MCF 10A (cell line): ENCODE measurements at regions of chr2 and their contacts with region 1.

Region 1: DNA sequence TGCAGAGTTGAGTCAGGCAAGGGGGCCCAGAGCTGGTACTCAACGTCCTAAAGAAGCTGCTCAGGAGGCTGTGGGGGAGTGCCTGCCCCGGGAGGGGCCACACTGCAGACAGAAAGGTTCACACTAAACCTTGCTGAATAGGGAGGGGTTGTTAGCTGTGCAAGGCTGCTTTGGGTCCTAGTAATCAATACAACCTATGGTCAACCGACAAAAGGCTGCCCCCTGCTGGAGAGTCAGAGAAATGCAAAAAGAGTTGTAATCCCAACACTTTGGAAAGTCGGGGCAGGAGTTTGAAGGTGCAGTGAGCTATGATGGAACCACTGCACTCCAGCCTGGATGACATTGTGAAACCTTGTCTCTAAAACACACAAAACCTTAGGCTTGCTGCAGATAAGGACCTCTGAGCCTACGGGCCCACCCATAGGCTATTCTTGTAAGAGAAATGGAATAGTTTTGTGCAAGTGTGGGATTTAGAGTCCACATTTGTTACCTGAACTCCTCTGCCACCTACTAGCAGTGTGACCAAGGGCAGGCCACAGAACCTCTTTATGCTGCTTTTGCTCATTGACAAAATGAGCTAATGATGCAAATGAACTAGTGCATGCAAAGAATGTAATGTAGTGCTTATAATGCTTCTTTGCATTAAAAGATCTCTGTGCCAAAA is 81.5 kb downstream of the PRPF40A start:
- DNase-seq: peak; percentile 72
- H3K4me3 Mint-ChIP-seq: no peak overlapping the region
- H3K27ac Mint-ChIP-seq: no peak overlapping the region
- H3K4me1 Mint-ChIP-seq: no peaks in the 10 kb centered on the region
- H3K27me3 Mint-ChIP-seq: no peaks in the 10 kb centered on the region
- CTCF ChIP-seq: peak; percentile 77

Region 2: DNA sequence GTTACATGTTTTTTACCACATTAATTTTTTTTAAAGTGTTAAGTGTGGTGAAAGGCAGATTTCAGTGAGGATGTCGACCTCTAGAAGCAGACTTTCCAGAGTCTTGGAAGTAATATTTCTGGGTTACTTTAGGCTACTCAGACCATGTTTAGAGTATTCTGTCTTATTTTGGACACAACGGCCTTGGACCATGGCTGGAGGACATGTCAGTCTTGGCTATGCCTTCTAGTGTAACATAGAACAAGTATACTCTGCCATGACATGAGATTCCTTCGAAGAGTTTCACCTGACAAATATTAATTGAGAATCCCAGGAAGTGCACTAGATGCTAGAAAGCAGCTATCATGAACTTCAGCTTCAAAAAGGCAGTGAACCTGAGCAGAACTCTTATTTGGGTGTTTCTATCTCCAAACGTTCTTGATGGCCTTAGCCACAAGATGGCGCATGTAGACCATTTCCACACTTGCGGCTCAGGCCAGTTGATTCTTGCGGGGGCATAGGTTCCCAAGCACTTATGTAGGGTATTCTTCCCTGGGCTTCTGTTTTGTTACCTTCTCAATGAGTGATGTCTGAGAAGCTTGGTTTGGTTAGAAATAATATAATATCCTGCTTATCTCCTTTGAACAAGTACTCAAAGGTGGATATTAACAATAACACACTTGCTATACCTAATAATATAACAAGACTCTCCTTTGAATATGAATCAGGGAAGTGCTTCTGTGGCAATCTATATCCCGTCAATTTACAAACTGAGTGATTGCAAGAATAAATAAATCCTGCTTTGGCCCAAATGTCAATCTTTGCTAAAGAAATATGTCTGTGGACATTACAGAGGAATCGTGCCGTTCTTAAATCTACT is 598.9 kb before region 1 on chr2:
- CTCF ChIA-PET with region 1: interaction called, 35 read pairs
- POLR2A ChIA-PET with region 1: no interaction called
- intact Hi-C with region 1: loop called (anchors 1 kb)
- DNase-seq: peak; percentile 76
- H3K4me3 Mint-ChIP-seq: no peak overlapping the region
- H3K27ac Mint-ChIP-seq: no peak overlapping the region
- H3K4me1 Mint-ChIP-seq: no peaks in the 10 kb centered on the region
- H3K27me3 Mint-ChIP-seq: no peaks in the 10 kb centered on the region
- CTCF ChIP-seq: peak; percentile 86

Region 3: DNA sequence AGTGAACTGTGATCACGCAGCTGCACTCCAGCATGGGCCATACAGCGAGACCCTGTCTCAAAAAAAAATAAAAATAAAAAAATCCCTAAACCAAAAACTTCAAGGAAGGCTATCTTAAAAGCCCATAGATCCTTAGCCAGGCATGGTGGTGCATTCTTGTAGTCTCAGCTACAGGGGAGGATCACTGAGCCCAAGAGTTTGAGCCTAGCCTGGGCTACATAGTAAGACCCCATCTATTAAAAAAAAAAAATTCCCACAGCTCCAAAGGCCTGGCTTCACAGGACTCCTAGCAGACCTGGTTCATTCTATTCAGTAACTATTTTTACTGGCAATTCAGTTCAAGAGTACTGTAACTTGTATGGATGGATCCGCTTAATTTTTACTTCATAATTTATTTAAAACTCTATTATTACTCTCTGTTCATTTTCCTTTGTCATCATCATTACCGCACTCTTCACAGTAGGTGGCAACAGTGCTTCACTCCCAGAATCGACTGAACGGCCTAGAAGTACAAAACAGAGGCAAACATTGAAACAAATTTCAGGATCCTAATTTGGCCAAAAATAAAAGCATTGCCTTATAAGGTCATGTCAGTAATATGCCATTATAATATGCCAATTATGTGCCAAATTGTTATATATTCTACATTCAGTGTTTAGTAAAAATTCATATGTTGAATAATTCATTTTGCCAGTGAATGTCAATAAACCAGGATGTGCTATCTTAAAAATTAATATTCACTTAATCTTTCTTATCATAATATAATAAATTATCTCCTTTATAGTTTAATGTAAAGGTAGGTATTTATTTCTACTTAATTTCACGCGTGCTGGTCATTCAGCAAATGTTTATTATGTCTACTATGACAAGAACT is 445.9 kb before region 1 on chr2:
- CTCF ChIA-PET with region 1: interaction called, 52 read pairs
- POLR2A ChIA-PET with region 1: interaction called, 9 read pairs
- intact Hi-C with region 1: loop called (anchors 1 kb)
- DNase-seq: peak; percentile 85
- H3K4me3 Mint-ChIP-seq: no peak overlapping the region
- H3K27ac Mint-ChIP-seq: no peak overlapping the region
- H3K4me1 Mint-ChIP-seq: no peaks in the 10 kb centered on the region
- H3K27me3 Mint-ChIP-seq: no peaks in the 10 kb centered on the region
- CTCF ChIP-seq: peak; percentile 84

Region 4: GRCh38 chr2:152354909-152355308 is 280.9 kb before region 1 on chr2:
- CTCF ChIA-PET with region 1: no interaction called
- POLR2A ChIA-PET with region 1: no interaction called
- intact Hi-C with region 1: no loop called
- DNase-seq: peak; percentile 27
- H3K4me3 Mint-ChIP-seq: no peak overlapping the region
- H3K27ac Mint-ChIP-seq: peak overlapping the region; percentile 27
- H3K4me1 Mint-ChIP-seq: peaks cover 18% of the 10 kb centered on the region
- H3K27me3 Mint-ChIP-seq: no peaks in the 10 kb centered on the region
- CTCF ChIP-seq: no peak

Region 5: GRCh38 chr2:152485954-152486736 is 149.6 kb before region 1 on chr2:
- CTCF ChIA-PET with region 1: interaction called, 10 read pairs
- POLR2A ChIA-PET with region 1: no interaction called
- intact Hi-C with region 1: no loop called
- DNase-seq: no peak
- H3K4me3 Mint-ChIP-seq: no peak overlapping the region
- H3K27ac Mint-ChIP-seq: no peak overlapping the region
- H3K4me1 Mint-ChIP-seq: peaks cover 6% of the 10 kb centered on the region
- H3K27me3 Mint-ChIP-seq: no peaks in the 10 kb centered on the region
- CTCF ChIP-seq: no peak

Region 6: GRCh38 chr2:152558158-152558984 is 77.4 kb before region 1 on chr2:
- CTCF ChIA-PET with region 1: no interaction called
- POLR2A ChIA-PET with region 1: no interaction called
- intact Hi-C with region 1: no loop called
- DNase-seq: peak; percentile 64
- H3K4me3 Mint-ChIP-seq: no peak overlapping the region
- H3K27ac Mint-ChIP-seq: no peak overlapping the region
- H3K4me1 Mint-ChIP-seq: peaks cover 12% of the 10 kb centered on the region
- H3K27me3 Mint-ChIP-seq: no peaks in the 10 kb centered on the region
- CTCF ChIP-seq: no peak

Region 7: DNA sequence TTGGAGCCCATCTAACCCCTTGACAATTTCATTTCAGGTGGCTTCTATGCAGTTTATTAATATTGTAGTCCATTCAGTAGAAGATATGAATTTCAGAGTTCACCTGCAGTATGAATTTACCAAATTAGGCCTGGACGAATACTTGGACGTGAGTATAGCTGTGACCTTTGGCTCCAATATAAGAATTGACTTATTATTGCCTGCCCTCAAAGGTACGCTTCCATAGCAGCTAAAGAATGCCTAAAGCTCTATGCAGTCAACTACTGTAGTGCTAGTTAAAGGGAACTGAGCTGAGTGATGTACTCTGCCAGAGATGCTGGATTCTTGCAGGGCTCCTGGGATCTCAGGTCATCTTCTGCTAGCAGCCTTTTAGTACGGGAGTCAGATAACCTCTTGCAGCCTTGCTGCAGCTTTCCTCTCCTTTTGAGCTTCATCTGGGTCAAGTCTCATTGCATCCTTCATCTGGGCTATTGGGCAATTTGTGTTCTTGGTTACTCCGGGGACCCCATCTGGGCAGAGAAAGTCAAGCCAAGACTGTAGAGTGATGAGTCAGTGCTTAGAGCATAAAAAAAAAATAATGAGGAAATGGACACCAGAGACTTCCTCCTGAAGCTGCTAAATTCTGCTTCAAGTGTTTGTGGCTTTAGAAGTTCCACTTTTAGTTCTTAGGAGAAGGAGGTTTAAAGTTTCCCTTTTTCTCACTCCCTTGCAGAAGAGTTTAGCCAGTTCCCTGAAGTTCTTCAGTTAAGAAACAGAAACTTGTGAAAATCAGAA is 24.1 kb before region 1 on chr2:
- CTCF ChIA-PET with region 1: interaction called, 32 read pairs
- POLR2A ChIA-PET with region 1: interaction called, 3 read pairs
- intact Hi-C with region 1: no loop called
- DNase-seq: peak; percentile 81
- H3K4me3 Mint-ChIP-seq: no peak overlapping the region
- H3K27ac Mint-ChIP-seq: peak overlapping the region; percentile 20
- H3K4me1 Mint-ChIP-seq: peaks cover 6% of the 10 kb centered on the region
- H3K27me3 Mint-ChIP-seq: no peaks in the 10 kb centered on the region
- CTCF ChIP-seq: no peak

Region 8: DNA sequence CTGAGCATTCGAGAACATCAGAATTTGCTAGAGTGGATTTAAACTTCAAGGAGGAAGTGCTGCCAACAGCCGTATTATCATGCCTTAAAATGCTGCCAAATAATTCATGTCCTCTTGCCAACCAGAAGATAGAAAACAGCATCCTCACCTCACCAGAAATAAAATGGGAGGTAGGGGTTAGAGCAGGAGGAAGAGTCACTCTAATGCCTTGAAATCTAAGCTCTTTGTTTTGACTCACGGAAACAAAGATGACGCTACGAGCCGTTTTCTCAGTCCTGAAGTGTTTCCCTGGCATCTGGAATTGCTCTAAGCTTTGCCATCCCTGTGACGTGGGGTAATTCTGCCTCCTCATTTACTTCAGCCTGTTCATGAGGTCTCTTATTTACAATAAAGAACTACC is 15.6 kb before region 1 on chr2:
- CTCF ChIA-PET with region 1: interaction called, 32 read pairs
- POLR2A ChIA-PET with region 1: interaction called, 3 read pairs
- intact Hi-C with region 1: no loop called
- DNase-seq: no peak
- H3K4me3 Mint-ChIP-seq: no peak overlapping the region
- H3K27ac Mint-ChIP-seq: peak overlapping the region; percentile 30
- H3K4me1 Mint-ChIP-seq: no peaks in the 10 kb centered on the region
- H3K27me3 Mint-ChIP-seq: no peaks in the 10 kb centered on the region
- CTCF ChIP-seq: no peak

Region 9: GRCh38 chr2:152648336-152648735 is 12.6 kb after region 1 on chr2:
- CTCF ChIA-PET with region 1: interaction called, 80 read pairs
- POLR2A ChIA-PET with region 1: interaction called, 6 read pairs
- intact Hi-C with region 1: no loop called
- DNase-seq: no peak
- H3K4me3 Mint-ChIP-seq: no peak overlapping the region
- H3K27ac Mint-ChIP-seq: no peak overlapping the region
- H3K4me1 Mint-ChIP-seq: peaks cover 6% of the 10 kb centered on the region
- H3K27me3 Mint-ChIP-seq: no peaks in the 10 kb centered on the region
- CTCF ChIP-seq: peak; percentile 20